ENCODE measurements at regions of chr22 and their contacts with region 1.

Region 1: GRCh38 chr22:45629469-45630089 is 42.1 kb upstream of the ATXN10 start:
- DNase-seq: no peak
- ATAC-seq: peak; percentile 34
- H3K4me3 Mint-ChIP-seq: no peak overlapping the region
- H3K27ac Mint-ChIP-seq: peak overlapping the region; percentile 90
- H3K4me1 Mint-ChIP-seq: peaks cover 61% of the 10 kb centered on the region
- H3K27me3 Mint-ChIP-seq: peaks cover 14% of the 10 kb centered on the region
- CTCF ChIP-seq: no peak

Region 2: DNA sequence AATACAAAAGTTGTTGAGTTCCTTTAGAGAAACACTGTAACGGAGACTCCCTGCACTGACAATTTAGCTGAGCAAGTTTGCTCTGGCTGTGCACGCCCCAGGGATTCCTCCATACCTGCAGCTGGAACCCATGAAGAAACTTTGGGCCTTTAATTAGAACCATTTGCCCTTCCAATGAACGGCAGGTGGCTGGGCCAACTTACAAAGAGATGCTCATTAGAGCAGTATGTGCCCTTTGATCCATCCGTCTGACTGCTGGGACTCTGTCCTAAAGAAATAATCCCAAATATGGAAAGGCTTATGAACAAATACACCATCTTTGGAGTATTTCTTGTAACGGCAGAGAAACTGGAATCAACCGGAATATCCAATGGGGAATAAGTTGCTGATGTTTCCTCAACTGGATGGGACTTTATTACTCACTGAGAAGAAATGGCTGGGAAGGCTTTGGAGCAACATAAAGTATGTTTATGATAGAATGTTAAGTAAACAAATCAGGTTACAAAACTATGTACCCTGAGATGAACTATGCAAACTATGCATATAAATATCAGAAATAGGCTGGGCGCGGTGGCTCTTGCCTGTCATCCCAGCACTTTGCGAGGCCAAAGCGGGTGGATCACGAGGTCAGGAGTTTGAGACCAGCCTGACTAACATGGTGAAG is 151.3 kb before region 1 on chr22:
- CTCF ChIA-PET with region 1: no interaction called
- POLR2A ChIA-PET with region 1: no interaction called
- DNase-seq: no peak
- ATAC-seq: no peak
- H3K4me3 Mint-ChIP-seq: no peak overlapping the region
- H3K27ac Mint-ChIP-seq: no peak overlapping the region
- H3K4me1 Mint-ChIP-seq: 0 out of 2 replicates have a peak, but pooled peaks cover 10% of the 10 kb centered on the region
- H3K27me3 Mint-ChIP-seq: no peaks in the 10 kb centered on the region; the same call in 1 of the 2 replicates
- CTCF ChIP-seq: no peak

Region 3: GRCh38 chr22:45511847-45512281 is 117.7 kb before region 1 on chr22:
- CTCF ChIA-PET with region 1: no interaction called
- POLR2A ChIA-PET with region 1: no interaction called
- DNase-seq: no peak
- ATAC-seq: no peak
- H3K4me3 Mint-ChIP-seq: no peak overlapping the region
- H3K27ac Mint-ChIP-seq: peak overlapping the region; percentile 65
- H3K4me1 Mint-ChIP-seq: peaks cover 77% of the 10 kb centered on the region
- H3K27me3 Mint-ChIP-seq: no peaks in the 10 kb centered on the region
- CTCF ChIP-seq: no peak

Region 4: DNA sequence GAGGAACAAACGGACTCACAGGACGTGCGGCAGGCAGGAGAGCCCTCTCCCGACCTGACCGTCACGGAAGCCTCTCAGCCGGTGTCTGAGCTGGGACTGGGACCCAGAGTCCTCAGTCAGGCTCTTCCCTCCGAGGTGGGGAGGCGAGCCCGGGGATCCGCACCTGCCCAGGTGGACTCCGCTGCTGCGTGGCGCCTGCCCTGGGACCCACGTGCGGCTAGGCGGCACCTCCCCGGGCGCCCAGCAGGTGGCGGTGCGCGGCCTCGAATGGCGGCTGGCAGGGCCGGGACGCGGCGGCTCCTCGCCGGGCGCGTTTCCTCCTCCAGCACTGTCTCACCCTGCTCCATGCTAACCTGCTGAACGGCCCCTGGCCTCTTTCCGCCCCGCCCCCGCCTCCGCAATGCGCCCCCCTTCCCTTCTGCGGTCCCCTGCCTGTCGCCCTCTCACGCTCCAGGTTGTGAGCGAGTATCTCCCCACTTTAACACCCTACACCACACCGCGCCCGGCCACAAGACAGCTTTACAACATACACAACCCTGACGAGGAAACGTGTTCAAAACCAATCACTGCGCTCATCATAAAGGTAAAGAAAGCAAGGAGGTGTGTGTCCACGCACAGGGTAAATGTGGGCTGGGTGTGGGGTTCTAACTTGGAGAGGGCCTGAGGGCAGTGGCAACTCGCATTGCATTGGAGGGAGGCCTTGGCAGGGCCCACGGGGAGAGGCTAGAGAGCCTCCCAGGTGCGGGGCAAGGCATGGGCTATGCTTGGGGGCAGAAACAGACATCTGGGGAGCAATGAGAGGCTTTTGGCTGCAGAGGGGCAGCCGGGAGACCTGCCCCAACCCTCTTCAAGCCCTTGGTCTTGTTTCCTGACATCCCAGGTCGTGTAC is 16.2 kb after region 1 on chr22:
- CTCF ChIA-PET with region 1: interaction called, 10 read pairs
- POLR2A ChIA-PET with region 1: no interaction called
- DNase-seq: peak; percentile 86
- ATAC-seq: peak; percentile 93
- H3K4me3 Mint-ChIP-seq: peak overlapping the region; percentile 61
- H3K27ac Mint-ChIP-seq: no peak overlapping the region
- H3K4me1 Mint-ChIP-seq: peaks cover 21% of the 10 kb centered on the region
- H3K27me3 Mint-ChIP-seq: peaks cover 36% of the 10 kb centered on the region
- CTCF ChIP-seq: peak; percentile 88

Region 5: DNA sequence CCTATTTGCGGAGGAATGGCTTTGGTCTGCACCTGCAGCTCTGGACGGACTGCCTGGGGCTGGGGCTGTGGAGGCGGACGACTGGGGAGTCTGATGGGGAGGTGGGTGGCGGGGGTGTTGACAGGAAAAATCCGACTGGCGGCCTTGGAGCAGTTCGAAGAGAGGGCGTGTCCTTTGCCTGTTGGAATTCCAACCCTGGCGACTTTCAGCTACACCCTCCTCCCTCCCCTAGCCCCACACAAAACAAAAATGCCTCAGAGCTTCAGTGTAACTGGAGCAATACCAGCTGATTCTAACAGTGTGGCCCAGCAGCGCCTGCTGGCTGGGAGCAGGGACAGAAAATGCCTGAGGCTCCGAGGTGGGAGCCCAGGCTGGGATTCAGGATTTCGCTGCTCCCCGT is 127.5 kb after region 1 on chr22:
- CTCF ChIA-PET with region 1: no interaction called
- POLR2A ChIA-PET with region 1: no interaction called
- DNase-seq: peak; percentile 83
- ATAC-seq: peak; percentile 97
- H3K4me3 Mint-ChIP-seq: peak overlapping the region; percentile 61
- H3K27ac Mint-ChIP-seq: peak overlapping the region; percentile 98
- H3K4me1 Mint-ChIP-seq: peaks cover 34% of the 10 kb centered on the region
- H3K27me3 Mint-ChIP-seq: no peaks in the 10 kb centered on the region
- CTCF ChIP-seq: no peak